Caco-2 (cell line): ENCODE measurements at regions of chr2 and their contacts with region 1.

Region 1: DNA sequence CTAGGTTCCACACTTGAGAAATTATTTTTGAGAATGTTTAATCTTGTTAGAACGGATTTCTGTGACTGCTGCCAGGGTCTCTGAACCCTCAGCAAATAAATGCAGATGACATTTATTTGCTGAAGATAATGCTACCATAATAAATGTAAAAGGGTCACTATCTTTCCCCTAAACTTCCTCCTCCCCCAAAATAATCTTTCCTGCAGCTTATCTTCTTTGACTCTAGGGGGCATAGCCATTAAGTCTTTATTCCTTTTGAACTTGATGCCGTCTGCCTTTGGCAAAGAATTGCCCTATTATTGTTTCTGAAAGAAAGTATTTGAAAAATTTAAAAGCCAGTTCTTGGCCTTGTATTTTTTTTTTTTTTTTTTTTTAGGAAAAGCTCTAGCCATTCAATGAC is 63.6 kb upstream of the ACSL3 start:
- DNase-seq: no peak
- H3K4me3 ChIP-seq: no peak overlapping the region
- H3K4me3 Mint-ChIP-seq: peak overlapping the region; percentile 39
- H3K27ac Mint-ChIP-seq: peak overlapping the region; percentile 20
- H3K4me1 ChIP-seq: peaks cover 64% of the 10 kb centered on the region
- H3K4me1 Mint-ChIP-seq: peaks cover 48% of the 10 kb centered on the region
- H3K27me3 ChIP-seq: no peaks in the 10 kb centered on the region
- H3K27me3 Mint-ChIP-seq: no peaks in the 10 kb centered on the region
- CTCF ChIP-seq: peak; percentile 33 to 43

Region 2: DNA sequence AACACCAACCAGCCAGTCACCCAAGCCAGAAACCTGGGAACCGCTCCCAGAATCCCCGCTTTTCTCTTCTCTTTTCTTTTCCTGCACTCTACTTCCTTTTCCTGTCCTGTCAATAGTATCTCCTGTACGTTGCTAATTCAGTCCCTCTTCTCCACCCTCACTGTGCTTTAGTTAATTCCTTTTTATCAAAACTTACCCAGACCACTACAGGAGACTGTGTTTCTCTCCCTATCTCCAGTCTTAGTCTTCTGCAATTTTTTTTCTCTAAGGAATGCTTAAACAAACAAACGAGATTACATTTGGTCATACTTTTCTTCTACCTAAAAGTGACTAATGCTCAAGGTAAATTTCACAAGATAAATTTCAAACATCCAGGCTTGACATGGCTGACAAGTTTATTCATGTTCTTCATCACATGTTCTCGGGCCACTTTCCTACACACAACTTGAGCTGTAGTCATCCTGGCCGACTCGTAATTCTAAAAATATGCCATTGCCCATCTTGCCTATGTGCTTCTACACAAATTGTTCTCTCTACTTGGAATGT is 40.3 kb after region 1 on chr2:
- CTCF ChIA-PET with region 1: interaction called, 4 read pairs
- POLR2A ChIA-PET with region 1: no interaction called
- intact Hi-C with region 1: loop called (anchors 1 kb)
- DNase-seq: peak; percentile 52 to 60
- H3K4me3 ChIP-seq: no peak overlapping the region
- H3K4me3 Mint-ChIP-seq: peak overlapping the region; percentile 59
- H3K27ac Mint-ChIP-seq: peak overlapping the region; percentile 88
- H3K4me1 ChIP-seq: peaks cover 56% of the 10 kb centered on the region
- H3K4me1 Mint-ChIP-seq: peaks cover 15% of the 10 kb centered on the region
- H3K27me3 ChIP-seq: no peaks in the 10 kb centered on the region
- H3K27me3 Mint-ChIP-seq: no peaks in the 10 kb centered on the region
- CTCF ChIP-seq: no peak

Region 3: GRCh38 chr2:222860740-222861410 is 63.6 kb after region 1 on chr2 and contains the start of gene ACSL3:
- CTCF ChIA-PET with region 1: interaction called, 19 read pairs
- POLR2A ChIA-PET with region 1: interaction called, 8 read pairs
- intact Hi-C with region 1: loop called (anchors 1 kb)
- DNase-seq: peak; percentile 98 to 100
- H3K4me3 ChIP-seq: peak within 1 kb of the TSS; percentile 99
- H3K4me3 Mint-ChIP-seq: no peak within 1 kb of the TSS
- H3K27ac Mint-ChIP-seq: peak within 1 kb of the TSS; percentile 78
- H3K4me1 ChIP-seq: peaks cover 50% of the 10 kb centered on the region
- H3K4me1 Mint-ChIP-seq: peaks cover 15% of the 10 kb centered on the region
- H3K27me3 ChIP-seq: no peaks in the 10 kb centered on the region; the same call in 1 of the 2 replicates
- H3K27me3 Mint-ChIP-seq: no peaks in the 10 kb centered on the region
- CTCF ChIP-seq: peak in 1 of 2 experiments; percentile 21
- total RNA-seq, gene ACSL3: 181 and 185 TPM in 2 replicates

Region 4: GRCh38 chr2:222903234-222904220 is 106.3 kb after region 1 on chr2:
- CTCF ChIA-PET with region 1: interaction called, 41 read pairs
- POLR2A ChIA-PET with region 1: no interaction called
- intact Hi-C with region 1: loop called (anchors 1 kb)
- DNase-seq: peak; percentile 67 to 75
- H3K4me3 ChIP-seq: no peak overlapping the region
- H3K4me3 Mint-ChIP-seq: no peak overlapping the region
- H3K27ac Mint-ChIP-seq: no peak overlapping the region
- H3K4me1 ChIP-seq: peaks cover 44% of the 10 kb centered on the region
- H3K4me1 Mint-ChIP-seq: peaks cover 72% of the 10 kb centered on the region
- H3K27me3 ChIP-seq: no peaks in the 10 kb centered on the region
- H3K27me3 Mint-ChIP-seq: no peaks in the 10 kb centered on the region
- CTCF ChIP-seq: peak; percentile 86 to 87